Activated T-helper 1 cell treated with anti-CD3 and anti-CD28 coated beads, Interleukin-12 subunit alpha, Interleukin-12 subunit beta, Interleukin-2, Interleukin-4 antibody, amounts not matched to agents 30 ng/mL and 10 ng/mL and 1 ng/mL, durations not matched to agents 14 hours and 24 hours and 36 hours (primary cell): ENCODE measurements at regions of chr2 and their contacts with region 1.

Region 1: GRCh38 chr2:70142590-70143313 is 48.1 kb downstream of the C2orf42 start:
- DNase-seq: peak; percentile 100
- H3K4me3 Mint-ChIP-seq: peak overlapping the region; percentile 80
- H3K27ac Mint-ChIP-seq: peak overlapping the region; percentile 91
- H3K4me1 Mint-ChIP-seq: peaks cover 58% of the 10 kb centered on the region
- H3K27me3 Mint-ChIP-seq: no peaks in the 10 kb centered on the region

Region 2: DNA sequence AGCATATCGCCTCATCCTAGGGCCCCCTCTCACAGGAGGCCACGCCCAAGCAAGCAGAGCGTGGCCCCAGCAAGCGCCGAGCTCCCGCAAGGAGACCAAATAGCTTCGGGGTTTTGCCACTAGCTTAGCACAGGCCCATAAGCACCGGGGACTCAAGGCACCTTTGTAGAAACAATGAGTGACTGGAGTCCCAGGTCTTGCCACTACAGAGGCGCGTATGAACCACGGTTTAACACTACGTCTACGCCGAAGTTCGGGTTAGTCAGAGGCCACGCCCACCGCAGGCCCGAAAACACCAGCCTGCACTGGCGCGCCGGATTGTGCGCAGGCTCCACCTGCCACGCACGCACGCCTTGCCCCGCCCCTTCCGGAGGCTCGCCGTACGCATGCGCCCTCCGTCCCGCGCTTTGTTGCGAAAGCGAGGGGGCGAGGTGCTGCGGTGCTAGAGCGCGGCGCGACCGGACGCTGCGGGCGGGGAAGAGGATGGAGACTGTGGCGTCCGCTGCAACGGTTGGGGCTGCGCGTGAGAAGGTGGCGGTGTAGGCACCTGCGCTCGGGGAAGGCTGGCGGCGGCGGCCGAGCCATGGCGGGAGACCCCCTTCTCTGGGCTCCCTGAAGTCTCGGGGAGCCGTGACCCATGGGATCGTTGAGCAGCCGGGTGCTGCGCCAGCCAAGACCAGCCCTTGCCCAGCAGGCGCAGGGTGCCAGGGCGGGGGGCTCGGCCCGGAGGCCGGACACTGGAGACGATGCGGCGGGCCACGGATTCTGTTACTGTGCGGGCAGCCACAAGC is 313.3 kb before region 1 on chr2 and contains the start of gene GMCL1:
- intact Hi-C with region 1: loop called (anchors 2 kb)
- DNase-seq: peak; percentile 99
- H3K4me3 Mint-ChIP-seq: peak within 1 kb of the TSS; percentile 98
- H3K27ac Mint-ChIP-seq: peak within 1 kb of the TSS; percentile 95
- H3K4me1 Mint-ChIP-seq: peaks cover 59% of the 10 kb centered on the region
- H3K27me3 Mint-ChIP-seq: no peaks in the 10 kb centered on the region
- total RNA-seq, gene GMCL1: 25.6 and 32.8 TPM in 2 replicates

Region 3: DNA sequence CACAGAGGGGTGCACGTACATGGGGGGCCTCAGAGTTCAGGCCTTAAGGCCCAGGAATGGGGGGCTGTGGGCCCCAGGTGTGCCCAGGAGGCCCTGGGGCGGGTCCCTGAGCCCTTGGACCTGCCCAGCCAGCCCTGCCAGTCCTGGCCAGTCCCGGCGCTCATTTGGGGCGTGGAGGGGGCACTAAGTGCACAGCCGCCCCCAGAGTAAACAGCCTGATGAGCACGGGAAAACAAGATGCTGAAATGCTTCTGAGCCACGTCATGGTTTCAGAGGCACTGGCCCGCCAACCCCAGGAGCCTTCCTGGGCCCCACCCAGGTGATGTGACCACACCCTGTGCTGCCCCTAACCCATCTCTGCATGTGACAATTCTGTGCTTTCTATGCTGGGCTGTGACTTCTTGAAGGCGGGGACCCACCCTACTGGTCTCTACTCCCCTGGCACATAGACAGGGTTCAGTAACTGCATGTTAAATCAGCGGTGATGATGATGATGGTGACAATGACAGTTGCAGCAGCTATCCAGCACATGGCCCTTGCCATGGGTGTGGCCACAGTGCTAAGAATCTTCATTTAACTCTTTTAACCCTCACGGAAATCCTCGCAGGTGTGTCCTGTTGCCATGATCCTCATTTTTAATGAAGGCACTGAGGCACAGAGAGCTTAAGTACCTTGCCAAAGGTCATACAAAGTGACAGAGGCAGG is 153.2 kb before region 1 on chr2:
- intact Hi-C with region 1: loop called (anchors 1 kb)
- DNase-seq: no peak
- H3K4me3 Mint-ChIP-seq: no peak overlapping the region
- H3K27ac Mint-ChIP-seq: no peak overlapping the region
- H3K4me1 Mint-ChIP-seq: peaks cover 12% of the 10 kb centered on the region
- H3K27me3 Mint-ChIP-seq: no peaks in the 10 kb centered on the region

Region 4: DNA sequence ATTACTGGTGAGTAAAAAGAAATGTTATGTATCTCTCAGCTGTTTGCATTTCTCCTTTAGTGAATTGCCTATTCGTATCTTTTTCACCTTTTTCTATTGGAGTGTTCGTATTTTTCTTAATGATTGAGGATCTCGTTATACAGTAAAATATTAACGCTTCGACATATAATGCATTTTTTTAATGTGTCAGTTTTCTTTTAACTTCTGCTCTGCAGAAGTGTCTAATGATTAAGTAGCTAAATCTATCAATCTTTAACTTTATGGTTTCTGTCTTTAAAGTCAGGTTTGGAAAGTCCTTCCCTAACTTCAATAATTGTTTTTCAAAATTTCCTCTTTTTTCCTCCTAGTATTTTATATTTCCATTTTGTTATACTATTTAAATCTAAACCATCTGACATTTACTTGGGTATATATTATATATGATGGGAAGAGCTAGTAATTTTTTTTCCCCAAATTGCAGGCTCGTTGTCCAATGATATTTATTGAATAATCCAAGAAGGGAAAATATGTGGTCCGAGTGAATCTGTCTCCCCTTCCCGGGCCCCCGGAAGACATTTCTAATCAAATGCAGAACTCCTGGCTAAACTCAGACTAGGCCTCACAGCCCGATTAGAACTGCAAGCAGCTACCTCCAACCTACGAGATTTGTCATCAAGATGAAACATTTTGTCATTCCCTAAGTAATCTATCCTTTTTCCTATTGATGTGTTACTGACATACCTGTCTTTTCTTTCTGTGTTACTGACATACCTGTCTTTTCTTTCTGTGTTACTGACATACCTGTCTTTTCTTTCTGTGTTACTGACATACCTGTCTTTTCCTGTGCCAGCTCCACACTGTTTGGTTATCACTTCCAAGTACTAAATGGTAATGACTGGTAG is 38.3 kb before region 1 on chr2:
- intact Hi-C with region 1: loop called (anchors 1 kb)
- DNase-seq: no peak
- H3K4me3 Mint-ChIP-seq: peak overlapping the region; percentile 79
- H3K27ac Mint-ChIP-seq: peak overlapping the region; percentile 87
- H3K4me1 Mint-ChIP-seq: peaks cover 42% of the 10 kb centered on the region
- H3K27me3 Mint-ChIP-seq: no peaks in the 10 kb centered on the region

Region 5: GRCh38 chr2:70190418-70191243 is 47.9 kb after region 1 on chr2 and contains the start of gene C2orf42:
- intact Hi-C with region 1: loop called (anchors 1 kb)
- DNase-seq: peak; percentile 95
- H3K4me3 Mint-ChIP-seq: peak within 1 kb of the TSS; percentile 95
- H3K27ac Mint-ChIP-seq: peak within 1 kb of the TSS; percentile 99
- H3K4me1 Mint-ChIP-seq: peaks cover 23% of the 10 kb centered on the region
- H3K27me3 Mint-ChIP-seq: peaks cover 3% of the 10 kb centered on the region
- total RNA-seq, gene C2orf42: 21.6 and 24.1 TPM in 2 replicates